Activated CD4-positive, alpha-beta memory T cell treated with anti-CD3 and anti-CD28 coated beads for 36 hours (primary cell): ENCODE measurements at regions of chr11 and their contacts with region 1.

Region 1: GRCh38 chr11:6022956-6023355 is 7.6 kb downstream of the OR56A1 start:
- DNase-seq: no peak
- H3K4me3 Mint-ChIP-seq: no peak overlapping the region
- H3K27ac Mint-ChIP-seq: no peak overlapping the region
- H3K4me1 Mint-ChIP-seq: no peaks in the 10 kb centered on the region
- H3K27me3 Mint-ChIP-seq: peaks cover 26% of the 10 kb centered on the region

Region 2: DNA sequence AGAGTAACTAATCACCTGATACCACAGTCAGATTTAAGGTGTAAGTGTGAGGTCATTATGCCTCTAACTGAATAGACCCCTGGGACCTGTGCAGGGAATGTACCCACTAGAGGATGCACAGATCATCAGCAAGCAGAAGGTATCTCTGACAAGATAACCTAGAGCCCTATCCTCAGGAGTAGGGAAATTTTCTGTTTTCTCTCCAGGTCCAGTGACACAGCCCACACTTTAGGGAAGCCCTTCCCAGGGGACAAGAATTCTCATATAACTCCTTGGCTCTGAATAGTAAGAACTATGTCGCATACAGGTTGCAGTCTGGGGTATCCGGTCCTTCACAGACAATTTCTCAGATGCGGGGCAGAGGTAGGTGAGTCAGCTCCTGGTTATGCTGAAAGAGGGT is 130.0 kb before region 1 on chr11 and contains the start of gene OR52E5:
- CTCF ChIA-PET with region 1: no interaction called
- POLR2A ChIA-PET with region 1: no interaction called
- intact Hi-C with region 1: no loop called
- DNase-seq: no peak
- H3K4me3 Mint-ChIP-seq: no peak within 1 kb of the TSS
- H3K27ac Mint-ChIP-seq: no peak within 1 kb of the TSS
- H3K4me1 Mint-ChIP-seq: no peaks in the 10 kb centered on the region
- H3K27me3 Mint-ChIP-seq: peaks cover 1% of the 10 kb centered on the region
- total RNA-seq, gene OR52E5: not detected

Region 3: DNA sequence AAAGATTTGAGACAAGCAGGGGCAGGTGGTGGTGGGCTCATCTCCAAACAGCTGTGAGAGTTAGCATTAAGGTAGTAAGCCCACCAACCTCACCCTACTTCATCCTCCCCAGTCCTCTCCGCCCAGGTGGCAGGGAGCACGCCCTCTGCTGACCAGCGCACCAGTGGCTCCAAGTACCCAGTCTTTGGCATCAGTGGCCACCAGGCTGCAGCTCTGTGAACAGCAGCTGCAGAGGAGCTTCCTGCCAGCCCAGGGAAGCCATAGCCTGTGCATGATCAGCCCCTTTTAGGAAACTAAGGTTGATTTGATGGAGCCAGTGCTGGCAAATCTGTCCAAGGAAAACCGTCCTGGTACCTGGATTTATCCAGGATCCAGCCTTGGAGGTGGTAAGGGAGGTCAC is 275.6 kb after region 1 on chr11:
- CTCF ChIA-PET with region 1: no interaction called
- POLR2A ChIA-PET with region 1: no interaction called
- intact Hi-C with region 1: loop called (anchors 5 kb)
- DNase-seq: peak; percentile 55
- H3K4me3 Mint-ChIP-seq: no peak overlapping the region
- H3K27ac Mint-ChIP-seq: no peak overlapping the region
- H3K4me1 Mint-ChIP-seq: no peaks in the 10 kb centered on the region
- H3K27me3 Mint-ChIP-seq: peaks cover 5% of the 10 kb centered on the region

Region 4: GRCh38 chr11:6315811-6316425 is 293.0 kb after region 1 on chr11:
- CTCF ChIA-PET with region 1: interaction called, 6 read pairs
- POLR2A ChIA-PET with region 1: no interaction called
- intact Hi-C with region 1: loop called (anchors 2 kb)
- DNase-seq: peak; percentile 53
- H3K4me3 Mint-ChIP-seq: no peak overlapping the region
- H3K27ac Mint-ChIP-seq: no peak overlapping the region
- H3K4me1 Mint-ChIP-seq: peaks cover 16% of the 10 kb centered on the region
- H3K27me3 Mint-ChIP-seq: peaks cover 32% of the 10 kb centered on the region